H1 (cell line): ENCODE measurements at regions of chr1 and their contacts with region 1.

Region 1: GRCh38 chr1:9181176-9181906 is 52.4 kb upstream of the GPR157 start:
- DNase-seq: peak in 1 of 2 experiments; percentile 97
- H3K4me3 ChIP-seq: peak overlapping the region; percentile 54 to 87 (median 78)
- H3K27ac ChIP-seq: no peak overlapping the region
- H3K4me1 ChIP-seq: peaks cover 4 to 13% (median 7%) of the 10 kb centered on the region in 4 experiments; a peak in 6 of 7 replicates
- H3K27me3 ChIP-seq: peaks cover 0 to 23% (median 12%) of the 10 kb centered on the region in 4 experiments; a peak in 5 of 7 replicates
- CTCF ChIP-seq: peak; percentile 79 to 97 (median 88)
- EP300 ChIP-seq: no peak
- POLR2A ChIP-seq: no peak; a peak in 1 of 3 replicates
- RAD21 ChIP-seq: peak; percentile 38 to 58

Region 2: DNA sequence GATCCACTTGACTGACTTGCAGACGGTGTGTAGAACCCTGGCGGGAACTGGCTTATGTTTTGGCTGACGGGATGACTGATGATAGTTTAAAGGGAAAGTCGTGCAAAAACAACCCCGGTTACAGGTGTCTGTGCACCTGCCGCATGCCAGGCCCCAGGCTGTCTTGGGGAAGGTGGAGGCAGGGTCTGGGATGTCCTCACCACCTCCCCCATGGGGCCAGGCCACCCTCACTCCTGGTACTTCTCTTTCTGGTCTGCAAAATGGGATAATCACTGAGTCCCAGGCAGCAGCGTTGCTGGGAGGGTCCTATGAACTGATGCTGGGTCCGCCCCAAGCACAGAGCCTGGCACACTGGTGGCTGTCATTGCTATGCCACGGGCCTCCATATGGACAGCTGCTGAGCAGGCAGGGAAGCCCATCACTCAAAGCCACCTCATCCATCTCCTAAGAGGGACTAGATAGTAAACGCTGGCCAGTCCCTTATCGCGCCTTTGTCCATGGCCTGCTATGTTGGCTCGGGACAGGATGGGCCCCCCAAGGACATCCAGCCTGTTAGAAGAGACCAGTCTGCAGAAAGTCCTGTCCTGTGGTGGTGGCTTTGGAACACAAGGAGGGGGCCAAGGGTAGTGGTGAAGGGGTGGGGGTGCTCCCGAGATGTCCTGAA is 140.1 kb before region 1 on chr1:
- CTCF ChIA-PET with region 1: no interaction called
- POLR2A ChIA-PET with region 1: no interaction called
- DNase-seq: no peak
- H3K4me3 ChIP-seq: no peak overlapping the region
- H3K27ac ChIP-seq: no peak overlapping the region
- H3K4me1 ChIP-seq: no peaks in the 10 kb centered on the region
- H3K27me3 ChIP-seq: no peaks in the 10 kb centered on the region; a peak in 1 of 7 replicates
- CTCF ChIP-seq: no peak
- EP300 ChIP-seq: no peak
- POLR2A ChIP-seq: no peak
- RAD21 ChIP-seq: no peak

Region 3: DNA sequence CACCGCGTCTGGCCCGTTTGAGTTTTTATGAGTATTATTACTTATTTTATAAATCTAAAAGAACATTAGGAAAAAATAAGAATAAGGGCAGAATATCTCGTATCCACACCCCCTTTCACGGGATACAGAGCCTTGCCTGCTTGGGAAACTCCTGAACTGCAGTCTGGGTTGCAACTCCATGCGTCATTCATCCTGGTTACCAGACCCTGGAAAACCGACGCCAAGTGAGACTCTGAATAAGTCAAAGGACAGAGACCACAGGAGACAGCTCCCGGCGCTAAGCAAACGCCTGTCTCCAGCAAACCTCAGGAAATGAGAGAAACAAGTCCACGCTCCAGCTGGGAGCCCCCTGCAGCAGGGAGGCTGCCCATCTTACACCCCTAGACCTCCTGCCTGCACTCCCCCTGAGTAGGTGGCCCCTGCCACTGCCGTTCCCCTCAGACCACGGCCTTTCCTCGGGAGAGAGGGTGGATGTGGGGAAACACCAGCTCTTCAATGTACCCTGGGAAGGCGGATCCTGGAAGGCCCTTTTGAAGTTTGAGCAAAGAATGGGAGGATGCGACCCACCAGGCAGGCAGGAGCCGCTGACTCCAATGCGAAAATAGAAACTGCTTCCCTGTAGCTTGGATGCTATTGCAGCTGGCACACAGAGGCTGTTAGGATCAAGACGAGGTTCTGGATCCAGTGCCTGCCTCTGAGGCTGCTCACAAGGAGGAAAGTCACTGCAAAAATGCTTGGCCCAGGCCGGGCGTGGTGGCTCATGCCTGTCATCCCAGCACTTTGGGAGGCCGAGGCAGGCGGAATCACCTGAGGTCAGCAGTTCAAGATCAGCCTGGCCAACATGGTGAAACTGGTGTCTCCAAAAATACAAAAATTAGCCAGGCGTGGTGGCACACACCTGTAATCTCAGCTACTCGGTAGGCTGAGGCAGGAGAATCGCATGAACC is 14.8 kb before region 1 on chr1:
- CTCF ChIA-PET with region 1: interaction called, 29 read pairs
- POLR2A ChIA-PET with region 1: interaction called, 3 read pairs
- DNase-seq: no peak
- H3K4me3 ChIP-seq: 0 out of 8 replicates have a peak overlapping the region, but pooled peaks of 1 of the 4 experiments have one; percentile 5
- H3K27ac ChIP-seq: no peak overlapping the region
- H3K4me1 ChIP-seq: peaks cover 0 to 26% (median 7%) of the 10 kb centered on the region in 4 experiments; a peak in 6 of 7 replicates
- H3K27me3 ChIP-seq: no peaks in the 10 kb centered on the region
- CTCF ChIP-seq: no peak
- EP300 ChIP-seq: no peak
- POLR2A ChIP-seq: no peak
- RAD21 ChIP-seq: no peak